Heart right ventricle (tissue), 16 donors: ENCODE measurements at regions of chr9 and their contacts with region 1.

Region 1: GRCh38 chr9:124040935-124041816 is 29.6 kb downstream of the LHX2 start:
- DNase-seq: peak; percentile 24 to 72
- ATAC-seq: peak; percentile 16 to 74 (median 50)
- H3K4me3 ChIP-seq: peak overlapping the region; percentile 14 to 52 (median 46)
- H3K27ac ChIP-seq: no peak overlapping the region
- H3K4me1 ChIP-seq: peaks cover 5 to 35% (median 23%) of the 10 kb centered on the region in 9 donors
- H3K27me3 ChIP-seq: peaks cover 0 to 97% (median 65%) of the 10 kb centered on the region in 7 donors
- CTCF ChIP-seq: peak; percentile 89 to 99 (median 97)

Region 2: GRCh38 chr9:123401879-123402513 is 639.2 kb before region 1 on chr9:
- intact Hi-C with region 1: loop called in 5 of 10 experiments (anchors 2 to 10 kb)
- DNase-seq: peak in 1 of 2 donors; percentile 24
- ATAC-seq: peak; percentile 71 to 91 (median 84)
- H3K4me3 ChIP-seq: peak overlapping the region in 1 of 10 donors; percentile 8
- H3K27ac ChIP-seq: peak overlapping the region in 1 of 10 donors; percentile 6
- H3K4me1 ChIP-seq: peaks cover 0 to 15% (median 6%) of the 10 kb centered on the region in 9 donors
- H3K27me3 ChIP-seq: no peaks in the 10 kb centered on the region
- CTCF ChIP-seq: peak; percentile 49 to 78 (median 67)

Region 3: DNA sequence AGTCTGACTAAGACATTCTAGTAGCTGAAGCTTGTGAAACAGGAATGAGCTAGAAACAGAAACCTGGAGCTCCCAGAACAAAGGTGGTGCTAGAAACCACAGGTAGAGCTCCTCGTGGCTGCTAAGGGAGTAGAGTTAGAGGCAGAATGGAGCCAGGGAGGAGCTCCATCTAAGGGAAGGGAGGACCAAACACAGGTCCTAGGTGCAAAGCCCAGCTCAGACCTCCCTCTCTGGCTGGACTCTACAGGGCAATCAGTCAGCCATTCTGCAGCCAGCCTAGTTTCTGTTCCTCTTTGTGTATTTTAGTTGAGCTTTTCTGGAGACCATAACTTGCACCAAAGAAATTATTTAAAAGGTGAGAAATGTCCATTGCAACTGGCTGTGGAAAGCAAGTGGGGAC is 614.8 kb before region 1 on chr9:
- intact Hi-C with region 1: loop called in 1 of 10 experiments (anchors 10 kb)
- DNase-seq: no peak
- ATAC-seq: no peak
- H3K4me3 ChIP-seq: no peak overlapping the region
- H3K27ac ChIP-seq: no peak overlapping the region
- H3K4me1 ChIP-seq: no peaks in the 10 kb centered on the region
- H3K27me3 ChIP-seq: no peaks in the 10 kb centered on the region
- CTCF ChIP-seq: no peak

Region 4: DNA sequence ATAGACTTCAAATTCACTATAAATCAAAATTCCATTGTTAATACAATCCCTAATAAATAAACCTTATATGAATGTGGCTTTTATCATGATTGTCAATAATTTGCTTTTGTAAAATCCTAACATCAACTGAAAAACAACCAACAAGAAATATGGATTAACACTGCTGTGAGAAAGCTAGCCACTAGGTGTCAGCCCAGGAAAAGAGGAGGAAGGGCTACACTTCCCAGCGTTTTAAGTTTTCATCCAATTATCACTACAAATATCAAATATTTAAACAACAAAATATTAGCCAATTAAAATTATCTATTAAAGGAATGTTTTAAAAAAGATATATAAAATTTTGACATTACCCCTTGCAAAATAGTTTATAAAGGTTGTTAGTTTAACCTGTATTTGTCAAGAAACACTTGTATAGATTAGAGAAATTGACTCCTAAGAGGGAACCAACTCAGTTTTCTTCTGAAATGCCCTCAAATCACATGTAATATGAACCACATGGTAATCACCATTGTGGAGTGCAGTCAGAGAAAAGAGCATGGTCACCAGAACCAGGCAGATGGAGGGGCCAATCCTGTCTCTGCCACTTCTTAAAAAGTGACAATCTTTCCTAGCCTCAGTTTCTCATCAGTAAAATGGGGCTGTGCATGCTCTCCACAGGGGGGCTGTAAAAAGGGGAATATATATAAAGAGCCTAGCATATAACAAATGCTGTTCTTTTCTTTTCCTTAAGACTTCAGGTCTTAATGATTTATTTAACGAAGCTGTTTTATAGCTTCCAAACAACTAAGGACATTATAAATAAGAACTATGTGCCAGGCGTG is 497.0 kb before region 1 on chr9:
- intact Hi-C with region 1: loop called (anchors 1 to 10 kb)
- DNase-seq: no peak
- ATAC-seq: no peak
- H3K4me3 ChIP-seq: no peak overlapping the region
- H3K27ac ChIP-seq: no peak overlapping the region
- H3K4me1 ChIP-seq: peaks cover 0 to 10% (median 4%) of the 10 kb centered on the region in 9 donors
- H3K27me3 ChIP-seq: no peaks in the 10 kb centered on the region
- CTCF ChIP-seq: peak; percentile 58 to 92 (median 80)

Region 5: DNA sequence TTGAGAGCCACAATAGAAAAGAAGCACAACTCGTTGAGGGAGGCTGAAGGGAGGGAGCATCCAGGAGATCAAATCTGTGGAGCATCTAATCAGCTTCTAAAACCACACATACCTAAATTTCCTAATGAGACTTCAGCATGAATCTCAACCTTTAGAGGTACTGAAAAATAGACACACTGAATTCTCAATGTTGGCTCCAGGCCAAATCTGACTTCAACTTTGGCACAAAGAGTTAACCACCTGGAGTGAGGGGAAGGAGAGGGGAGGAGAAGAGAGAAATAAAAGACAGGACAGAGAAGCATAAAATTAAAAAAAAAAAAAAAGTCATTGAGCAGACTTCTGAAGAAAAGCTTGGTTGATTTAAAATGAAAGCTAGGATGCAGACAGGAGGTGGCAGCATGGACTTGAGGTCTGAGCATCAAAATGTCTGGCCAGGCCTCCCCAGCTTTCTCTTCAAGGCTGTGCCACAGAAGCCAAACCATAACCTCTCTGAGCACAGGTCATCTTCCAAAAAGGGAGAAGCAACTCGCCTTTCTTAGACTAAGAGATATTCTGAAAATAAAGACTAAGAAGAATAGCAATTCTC is 316.9 kb before region 1 on chr9:
- intact Hi-C with region 1: loop called in 5 of 10 experiments (anchors 5 to 10 kb)
- DNase-seq: no peak
- ATAC-seq: no peak
- H3K4me3 ChIP-seq: no peak overlapping the region
- H3K27ac ChIP-seq: no peak overlapping the region
- H3K4me1 ChIP-seq: peaks cover 0 to 12% (median 0%) of the 10 kb centered on the region in 9 donors
- H3K27me3 ChIP-seq: no peaks in the 10 kb centered on the region
- CTCF ChIP-seq: peak in 5 of 9 donors; percentile 35 to 49 (median 41)